ENCODE measurements at regions of chr2 and their contacts with region 1.

Region 1: GRCh38 chr2:26033818-26034636 is at the start of gene RAB10:
- DNase-seq: peak; percentile 97 to 100 (median 99)
- ATAC-seq: peak; percentile 88
- H3K4me3 ChIP-seq: peak within 1 kb of the TSS; percentile 78
- H3K4me3 Mint-ChIP-seq: peak within 1 kb of the TSS; percentile 98
- H3K27ac ChIP-seq: peak within 1 kb of the TSS; percentile 91
- H3K27ac Mint-ChIP-seq: peak within 1 kb of the TSS; percentile 97
- H3K4me1 ChIP-seq: peaks cover 39% of the 10 kb centered on the region
- H3K4me1 Mint-ChIP-seq: peaks cover 43% of the 10 kb centered on the region
- H3K27me3 ChIP-seq: no peaks in the 10 kb centered on the region
- H3K27me3 Mint-ChIP-seq: no peaks in the 10 kb centered on the region
- CTCF ChIP-seq: no peak
- total RNA-seq, gene RAB10: 13.5 to 13.8 TPM

Region 2: DNA sequence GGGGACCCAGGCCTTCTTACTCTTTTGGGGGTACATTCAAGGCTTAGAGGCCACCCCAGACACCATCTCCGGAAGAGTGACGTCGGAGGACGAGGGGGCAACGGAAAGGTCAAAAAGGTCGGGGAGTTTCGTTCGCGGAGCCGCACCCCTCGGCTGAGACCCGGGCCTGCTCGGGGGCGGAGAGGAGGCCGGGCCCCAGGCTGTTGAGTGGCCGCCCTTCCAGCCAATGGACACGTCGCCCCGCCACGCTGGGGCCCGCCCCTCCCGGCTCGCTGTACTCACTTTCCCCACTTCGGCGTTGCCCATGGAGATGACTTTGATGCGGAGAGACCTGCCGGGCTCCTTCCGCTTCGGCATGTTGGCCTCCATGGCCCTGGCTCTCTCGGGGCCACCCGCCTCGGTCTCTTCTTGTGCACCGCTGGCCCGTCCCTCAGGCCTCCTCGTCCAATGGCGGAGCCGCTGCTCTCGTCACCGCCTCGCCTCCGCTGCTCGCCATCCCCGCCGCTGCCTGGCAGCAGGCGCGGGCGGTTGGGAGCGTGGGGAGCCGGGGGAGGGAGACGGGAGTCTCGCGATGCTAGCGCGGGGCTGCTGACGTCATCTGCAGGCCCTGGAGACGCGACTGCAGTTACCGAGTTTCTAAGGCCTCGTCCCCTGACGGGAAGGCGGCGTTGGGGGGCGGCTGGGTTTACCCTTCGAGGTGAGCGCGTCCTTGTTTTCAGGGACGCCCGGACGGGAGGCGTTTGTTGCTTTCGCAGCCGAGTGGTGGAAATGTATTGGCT is 1062.3 kb before region 1 on chr2 and contains the start of gene DNAJC27:
- CTCF ChIA-PET with region 1: no interaction called
- POLR2A ChIA-PET with region 1: no interaction called
- intact Hi-C with region 1: loop called in 1 of 2 experiments (anchors 5 kb)
- DNase-seq: peak; percentile 93 to 99 (median 97)
- ATAC-seq: peak; percentile 85
- H3K4me3 ChIP-seq: peak within 1 kb of the TSS; percentile 95
- H3K4me3 Mint-ChIP-seq: peak within 1 kb of the TSS; percentile 97
- H3K27ac ChIP-seq: peak within 1 kb of the TSS; percentile 98 to 99
- H3K27ac Mint-ChIP-seq: peak within 1 kb of the TSS; percentile 100
- H3K4me1 ChIP-seq: peaks cover 20% of the 10 kb centered on the region
- H3K4me1 Mint-ChIP-seq: peaks cover 32% of the 10 kb centered on the region
- H3K27me3 ChIP-seq: no peaks in the 10 kb centered on the region
- H3K27me3 Mint-ChIP-seq: no peaks in the 10 kb centered on the region
- CTCF ChIP-seq: no peak
- total RNA-seq, gene DNAJC27: 20.0 to 23.1 TPM

Region 3: GRCh38 chr2:25982273-25982967 is 51.6 kb before region 1 on chr2 and contains the start of gene KIF3C:
- CTCF ChIA-PET with region 1: no interaction called
- POLR2A ChIA-PET with region 1: interaction called, 12 read pairs
- intact Hi-C with region 1: loop called in 1 of 2 experiments (anchors 1 kb)
- DNase-seq: peak; percentile 56 to 85 (median 72)
- ATAC-seq: peak; percentile 95
- H3K4me3 ChIP-seq: peak within 1 kb of the TSS; percentile 88
- H3K4me3 Mint-ChIP-seq: peak within 1 kb of the TSS; percentile 92
- H3K27ac ChIP-seq: no peak within 1 kb of the TSS
- H3K27ac Mint-ChIP-seq: peak within 1 kb of the TSS; percentile 67
- H3K4me1 ChIP-seq: peaks cover 24% of the 10 kb centered on the region
- H3K4me1 Mint-ChIP-seq: peaks cover 18% of the 10 kb centered on the region
- H3K27me3 ChIP-seq: no peaks in the 10 kb centered on the region
- H3K27me3 Mint-ChIP-seq: no peaks in the 10 kb centered on the region
- CTCF ChIP-seq: no peak
- total RNA-seq, gene KIF3C: 1.8 to 3.4 TPM

Region 4: GRCh38 chr2:26043862-26044696 is 10.1 kb after region 1 on chr2:
- CTCF ChIA-PET with region 1: no interaction called
- POLR2A ChIA-PET with region 1: interaction called, 14 read pairs
- intact Hi-C with region 1: no loop called
- DNase-seq: peak in 4 of 14 experiments; percentile 5 to 49 (median 41)
- ATAC-seq: peak; percentile 57
- H3K4me3 ChIP-seq: peak overlapping the region; percentile 16
- H3K4me3 Mint-ChIP-seq: peak overlapping the region; percentile 16
- H3K27ac ChIP-seq: no peak overlapping the region
- H3K27ac Mint-ChIP-seq: peak overlapping the region; percentile 19
- H3K4me1 ChIP-seq: peaks cover 27% of the 10 kb centered on the region
- H3K4me1 Mint-ChIP-seq: peaks cover 63% of the 10 kb centered on the region
- H3K27me3 ChIP-seq: no peaks in the 10 kb centered on the region
- H3K27me3 Mint-ChIP-seq: no peaks in the 10 kb centered on the region
- CTCF ChIP-seq: no peak

Region 5: DNA sequence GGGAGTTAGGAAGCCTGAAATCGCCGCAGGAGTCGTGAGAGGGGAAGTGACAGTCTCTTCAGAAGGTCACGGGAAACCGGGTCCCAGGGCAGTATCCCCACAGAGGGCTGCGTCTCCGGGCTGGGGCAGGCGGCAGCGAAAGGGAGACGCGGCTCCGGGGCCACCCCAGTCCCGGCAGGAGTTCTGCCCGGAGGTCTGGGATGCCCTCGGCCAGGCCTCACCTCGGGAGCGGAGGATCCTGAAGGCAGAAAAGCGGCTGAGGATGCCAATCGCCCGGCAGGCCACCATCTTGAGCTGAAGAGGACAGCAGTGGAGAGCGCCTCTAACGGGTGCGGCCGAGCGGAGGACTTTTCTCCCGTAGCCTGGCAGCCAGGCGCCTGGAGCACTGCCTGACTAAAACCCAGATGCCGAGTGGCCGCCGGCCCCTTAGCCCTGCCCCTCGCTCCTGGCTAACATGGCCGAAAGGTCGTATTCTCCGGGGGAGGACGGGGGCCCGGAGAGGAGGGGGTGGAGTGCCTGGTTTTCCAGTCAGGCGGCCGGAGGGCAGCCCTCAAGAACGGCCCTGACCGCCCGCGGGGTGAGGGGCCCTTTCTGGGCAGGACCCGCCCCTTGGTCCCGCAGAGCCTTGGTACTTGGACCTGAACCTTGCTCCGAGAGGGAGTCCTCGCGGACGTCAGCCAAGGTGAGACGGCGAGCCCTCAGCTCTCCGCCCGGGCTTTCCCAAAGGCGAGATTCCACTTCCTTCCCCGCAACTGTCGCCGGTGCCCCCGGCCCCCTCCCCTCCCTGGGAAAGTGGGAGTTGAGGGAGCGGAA is 210.5 kb after region 1 on chr2 and contains the starts of genes HADHA and HADHB:
- CTCF ChIA-PET with region 1: no interaction called
- POLR2A ChIA-PET with region 1: no interaction called
- intact Hi-C with region 1: loop called (anchors 2 to 5 kb)
- DNase-seq: peak; percentile 68 to 93 (median 80)
- ATAC-seq: peak; percentile 81
- H3K4me3 ChIP-seq: peak within 1 kb of the TSS; percentile 96
- H3K4me3 Mint-ChIP-seq: peak within 1 kb of the TSS; percentile 100
- H3K27ac ChIP-seq: peak within 1 kb of the TSS; percentile 95 to 98
- H3K27ac Mint-ChIP-seq: peak within 1 kb of the TSS; percentile 97
- H3K4me1 ChIP-seq: peaks cover 33% of the 10 kb centered on the region
- H3K4me1 Mint-ChIP-seq: peaks cover 76% of the 10 kb centered on the region
- H3K27me3 ChIP-seq: no peaks in the 10 kb centered on the region
- H3K27me3 Mint-ChIP-seq: no peaks in the 10 kb centered on the region
- CTCF ChIP-seq: no peak
- total RNA-seq, gene HADHA: 72.4 to 73.7 TPM
- total RNA-seq, gene HADHB: 25.2 to 30.3 TPM

Region 6: GRCh38 chr2:26988058-26988860 is 954.2 kb after region 1 on chr2:
- CTCF ChIA-PET with region 1: no interaction called
- POLR2A ChIA-PET with region 1: no interaction called
- intact Hi-C with region 1: no loop called
- DNase-seq: no peak
- ATAC-seq: no peak
- H3K4me3 ChIP-seq: no peak overlapping the region
- H3K4me3 Mint-ChIP-seq: no peak overlapping the region
- H3K27ac ChIP-seq: no peak overlapping the region
- H3K27ac Mint-ChIP-seq: no peak overlapping the region
- H3K4me1 ChIP-seq: no peaks in the 10 kb centered on the region
- H3K4me1 Mint-ChIP-seq: no peaks in the 10 kb centered on the region
- H3K27me3 ChIP-seq: no peaks in the 10 kb centered on the region
- H3K27me3 Mint-ChIP-seq: no peaks in the 10 kb centered on the region
- CTCF ChIP-seq: no peak

Region 7: DNA sequence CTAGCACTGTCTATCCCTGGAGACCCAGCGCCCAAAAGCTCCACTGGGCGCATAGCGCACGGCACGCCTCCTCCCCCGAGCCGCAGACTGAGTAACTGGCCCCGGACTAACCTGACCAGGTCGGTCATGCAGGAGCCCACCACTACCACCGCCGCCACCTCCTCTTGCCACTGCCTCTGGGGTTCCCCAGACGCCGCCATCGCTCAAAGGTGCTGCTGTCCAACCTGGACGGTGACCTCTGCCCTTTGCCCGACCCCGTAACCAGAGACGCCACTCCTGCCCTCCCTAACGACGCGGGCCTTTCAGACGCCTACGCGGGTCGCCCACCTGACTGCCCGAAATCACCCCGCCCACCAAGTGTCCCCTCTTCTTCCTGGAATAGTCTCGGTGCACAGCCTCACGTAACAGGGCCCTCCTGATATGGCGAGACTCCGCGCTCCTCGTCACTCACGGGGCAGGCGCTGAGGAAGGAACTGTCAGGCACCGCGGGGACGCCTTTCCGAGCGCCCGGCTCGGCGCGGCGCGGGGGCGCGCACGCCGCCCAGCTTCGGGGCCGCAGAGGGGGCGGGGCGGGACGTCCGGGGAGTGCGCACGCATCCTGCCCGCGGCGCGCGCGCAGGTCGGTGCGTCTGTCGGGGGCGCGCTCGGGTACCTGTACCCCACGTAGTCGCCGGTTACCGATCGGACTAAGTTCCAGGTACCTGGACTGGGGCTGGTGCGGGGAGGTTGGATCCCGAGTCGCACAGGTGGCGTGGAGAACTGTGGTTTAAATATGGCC is 1856.3 kb after region 1 on chr2 and contains the starts of genes BABAM2 and RBKS:
- CTCF ChIA-PET with region 1: no interaction called
- POLR2A ChIA-PET with region 1: no interaction called
- intact Hi-C with region 1: loop called in 1 of 2 experiments (anchors 5 kb)
- DNase-seq: peak; percentile 83 to 98 (median 90)
- ATAC-seq: peak; percentile 73
- H3K4me3 ChIP-seq: peak within 1 kb of the TSS; percentile 79
- H3K4me3 Mint-ChIP-seq: peak within 1 kb of the TSS; percentile 97
- H3K27ac ChIP-seq: peak within 1 kb of the TSS; percentile 96 to 99
- H3K27ac Mint-ChIP-seq: peak within 1 kb of the TSS; percentile 100
- H3K4me1 ChIP-seq: peaks cover 23% of the 10 kb centered on the region
- H3K4me1 Mint-ChIP-seq: peaks cover 59% of the 10 kb centered on the region
- H3K27me3 ChIP-seq: no peaks in the 10 kb centered on the region
- H3K27me3 Mint-ChIP-seq: peaks cover 6% of the 10 kb centered on the region
- CTCF ChIP-seq: no peak
- total RNA-seq, gene BABAM2: 29.2 to 32.8 TPM
- total RNA-seq, gene RBKS: 2.6 to 3.0 TPM